Pancreas (tissue), 10 donors: ENCODE measurements at regions of chr10 and their contacts with region 1.

Region 1: GRCh38 chr10:116542007-116542677 is 3.6 kb upstream of the PNLIP start:
- DNase-seq: peak in 3 of 6 donors; percentile 47 to 78 (median 74)
- ATAC-seq: peak; percentile 57 to 78 (median 66)
- H3K4me3 ChIP-seq: no peak overlapping the region
- H3K27ac ChIP-seq: peak overlapping the region; percentile 66 to 85 (median 76)
- H3K4me1 ChIP-seq: peaks cover 9 to 48% (median 40%) of the 10 kb centered on the region in 3 donors
- H3K27me3 ChIP-seq: no peaks in the 10 kb centered on the region
- CTCF ChIP-seq: no peak

Region 2: DNA sequence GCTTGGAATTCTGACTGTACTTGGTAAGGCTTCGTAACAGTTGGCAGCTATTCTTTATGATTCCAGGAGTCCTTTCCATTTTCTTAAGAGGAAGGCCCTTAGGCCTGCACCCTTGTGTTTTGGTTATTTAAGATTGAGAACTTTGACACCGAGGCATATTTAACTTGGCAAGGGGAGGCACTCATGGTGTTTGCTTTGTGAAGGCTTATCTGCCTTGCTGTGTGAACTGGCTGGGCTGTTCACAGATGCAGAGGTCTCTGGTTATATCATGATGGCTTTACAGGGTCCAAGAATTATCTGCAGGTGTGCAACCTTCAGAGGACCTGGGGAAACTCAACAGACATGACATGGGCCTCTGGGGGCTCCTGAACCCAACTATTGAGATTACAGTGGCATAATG is 47.8 kb after region 1 on chr10:
- intact Hi-C with region 1: loop called in 1 of 3 experiments (anchors 5 kb)
- DNase-seq: peak in 4 of 6 donors; percentile 59 to 88 (median 84)
- ATAC-seq: peak; percentile 57 to 70 (median 64)
- H3K4me3 ChIP-seq: peak overlapping the region in 2 of 4 donors; percentile 46 to 52
- H3K27ac ChIP-seq: peak overlapping the region; percentile 91 to 95 (median 94)
- H3K4me1 ChIP-seq: peaks cover 8 to 22% (median 13%) of the 10 kb centered on the region in 3 donors
- H3K27me3 ChIP-seq: no peaks in the 10 kb centered on the region
- CTCF ChIP-seq: no peak